Right ventricle myocardium inferior (tissue), 1 donor: ENCODE measurements at regions of chr12 and their contacts with region 1.

Region 1: GRCh38 chr12:108457006-108457733 is 57.9 kb upstream of the FICD start:
- DNase-seq: no peak
- ATAC-seq: peak; percentile 81

Region 2: GRCh38 chr12:107992870-107993451 is 464.2 kb before region 1 on chr12:
- intact Hi-C with region 1: loop called (anchors 5 kb)
- DNase-seq: no peak
- ATAC-seq: no peak

Region 3: GRCh38 chr12:108099073-108099472 is 358.1 kb before region 1 on chr12:
- intact Hi-C with region 1: loop called (anchors 10 kb)
- DNase-seq: no peak
- ATAC-seq: no peak

Region 4: DNA sequence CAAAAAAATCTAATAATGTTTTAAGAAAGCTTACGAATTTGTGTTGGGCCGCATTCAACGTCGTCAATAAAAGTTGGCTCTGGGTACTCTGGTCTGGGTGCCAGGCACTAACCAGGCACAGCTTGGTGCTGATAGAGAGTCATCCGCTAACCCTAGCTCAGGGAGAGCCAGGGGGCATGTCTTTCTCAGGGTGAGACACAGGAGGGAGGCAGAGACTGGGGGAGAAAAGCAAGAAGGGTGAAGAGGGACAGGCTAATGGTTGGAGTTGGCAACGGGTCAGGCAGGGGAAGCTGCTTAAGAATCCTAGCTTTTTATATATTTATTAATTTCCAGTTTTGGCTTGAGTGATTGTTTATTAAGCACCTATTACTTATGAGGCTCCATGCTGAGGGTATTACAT is 223.0 kb before region 1 on chr12:
- intact Hi-C with region 1: loop called (anchors 5 kb)
- DNase-seq: no peak
- ATAC-seq: peak; percentile 73

Region 5: DNA sequence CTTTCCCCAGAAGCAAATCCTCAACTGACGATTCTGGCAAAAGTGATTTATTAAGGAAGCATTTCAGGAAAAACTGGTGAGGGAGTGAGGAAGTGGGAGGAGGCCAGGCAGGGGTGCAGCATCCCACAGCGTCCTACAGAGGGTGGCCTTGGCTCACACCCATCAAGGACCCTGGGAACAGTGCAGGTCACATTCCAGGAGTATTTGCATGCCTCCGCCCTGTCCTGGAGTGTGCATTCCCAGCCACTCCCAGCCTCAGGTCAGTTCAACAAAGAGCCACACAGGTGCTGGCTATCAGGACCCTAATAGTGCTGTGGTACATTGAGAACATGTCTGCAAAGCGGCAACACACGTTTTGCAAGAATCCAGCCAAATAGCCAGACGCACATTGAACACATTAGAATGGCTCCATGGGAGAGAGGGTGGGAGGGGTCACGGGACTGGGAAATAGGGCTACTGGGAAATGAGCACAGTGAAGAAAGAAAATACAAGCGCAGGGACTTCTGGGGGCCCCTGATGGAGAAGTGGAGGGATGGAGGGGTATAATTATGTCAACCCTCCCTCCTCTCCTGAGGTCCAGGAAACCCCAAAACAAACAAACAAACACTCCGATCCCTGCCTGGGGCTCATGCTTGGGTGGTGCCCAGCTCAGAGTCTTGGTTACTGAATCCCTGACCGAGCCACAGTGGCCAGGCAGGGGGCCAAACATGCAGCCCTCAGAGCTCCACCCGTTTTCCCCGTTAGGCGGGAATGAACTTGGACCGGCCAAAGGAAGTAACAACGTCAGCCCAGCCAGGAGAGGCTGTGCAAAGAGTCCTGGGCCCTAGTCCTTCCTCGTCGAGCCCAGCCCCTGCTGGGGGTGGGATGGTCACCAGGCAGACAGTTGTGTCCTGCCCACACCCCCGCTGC is 154.5 kb before region 1 on chr12:
- intact Hi-C with region 1: loop called (anchors 2 kb)
- DNase-seq: peak; percentile 91
- ATAC-seq: peak; percentile 67

Region 6: DNA sequence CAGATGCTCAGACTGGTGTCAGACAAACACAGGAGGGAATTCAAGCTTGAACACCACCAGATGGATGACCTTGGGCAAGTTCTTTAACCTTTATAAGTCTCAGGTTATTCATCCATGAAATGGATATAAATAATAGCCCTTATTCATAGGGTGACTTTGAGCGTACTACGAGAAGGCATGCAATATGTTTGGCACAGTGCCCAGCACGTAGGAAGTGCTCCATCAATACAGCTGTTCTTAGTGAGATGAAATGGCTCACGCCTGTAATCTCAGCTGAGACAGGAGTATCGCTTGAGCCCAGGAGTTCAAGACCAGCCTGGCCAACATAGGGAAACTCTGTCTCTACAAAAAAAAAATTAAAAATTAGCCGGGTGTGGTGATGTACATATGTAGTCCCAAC is 26.9 kb before region 1 on chr12:
- intact Hi-C with region 1: no loop called
- DNase-seq: no peak
- ATAC-seq: no peak